AG04450 (cell line): ENCODE measurements at regions of chr16 and their contacts with region 1.

Region 1: DNA sequence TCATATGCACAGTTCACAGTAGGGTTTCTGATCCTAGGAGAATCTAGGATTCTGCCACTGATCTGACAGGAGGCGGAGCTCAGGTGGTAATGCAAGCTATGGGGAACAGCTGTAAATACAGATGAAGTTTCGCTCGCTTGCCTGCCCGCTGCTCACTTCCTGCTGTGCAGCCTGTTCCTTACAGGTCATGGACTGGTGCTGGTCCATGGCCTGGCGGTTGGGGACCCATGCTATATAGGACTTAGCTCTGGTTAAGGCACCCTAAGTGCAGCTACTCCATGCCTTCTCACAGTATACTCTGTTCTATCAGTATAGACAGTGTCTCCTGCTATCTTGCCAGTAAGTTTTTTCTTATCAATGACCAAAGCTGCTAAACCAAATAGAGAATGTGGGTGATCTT is 2.4 kb downstream of the MPHOSPH6 start:
- DNase-seq: no peak
- H3K4me3 ChIP-seq: no peak overlapping the region
- H3K27ac ChIP-seq: no peak overlapping the region
- H3K27me3 ChIP-seq: no peaks in the 10 kb centered on the region
- CTCF ChIP-seq: no peak

Region 2: DNA sequence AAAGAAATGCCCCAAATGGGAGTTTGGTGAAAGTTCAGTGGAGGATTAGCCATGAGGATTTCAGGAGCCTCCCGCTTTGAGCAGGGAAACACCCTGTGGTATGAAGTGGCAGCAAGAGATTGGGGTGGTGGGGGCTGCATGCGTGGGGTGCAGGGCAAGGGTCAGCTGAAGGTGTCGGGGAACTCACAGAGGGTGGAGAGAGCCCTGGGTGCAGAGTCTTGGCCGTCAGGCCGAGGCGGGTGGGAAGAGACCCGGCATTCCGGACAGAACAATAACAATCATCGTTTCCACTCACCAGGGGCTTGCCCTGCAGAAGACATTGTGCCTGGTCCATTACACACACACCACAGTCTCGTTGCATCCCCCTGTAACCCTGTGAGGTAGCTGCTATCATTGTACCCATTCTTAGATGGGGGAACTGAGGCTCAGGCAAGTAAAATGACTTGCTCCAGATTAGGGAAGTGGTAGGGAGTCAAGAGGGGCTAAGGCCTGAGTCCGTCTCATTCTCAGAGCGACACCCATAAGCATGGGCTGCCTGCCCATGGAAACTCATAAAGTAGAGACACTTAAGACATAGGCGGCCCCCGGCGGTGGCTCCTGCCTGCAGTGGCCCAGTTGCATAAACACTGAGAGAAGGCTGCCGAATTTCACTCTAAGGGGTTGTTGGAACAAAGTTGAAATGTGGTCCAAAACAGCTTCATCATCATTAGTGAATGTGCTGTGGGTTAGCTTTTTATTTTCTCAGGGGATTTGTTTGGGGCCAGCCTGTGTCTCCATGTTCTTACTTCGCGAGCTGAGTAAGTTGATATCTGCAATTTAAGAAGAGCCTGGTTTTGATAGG is 629.7 kb before region 1 on chr16:
- CTCF ChIA-PET with region 1: no interaction called
- POLR2A ChIA-PET with region 1: interaction called, 11 read pairs
- DNase-seq: no peak
- H3K4me3 ChIP-seq: no peak overlapping the region
- H3K27ac ChIP-seq: no peak overlapping the region
- H3K27me3 ChIP-seq: no peaks in the 10 kb centered on the region
- CTCF ChIP-seq: no peak

Region 3: DNA sequence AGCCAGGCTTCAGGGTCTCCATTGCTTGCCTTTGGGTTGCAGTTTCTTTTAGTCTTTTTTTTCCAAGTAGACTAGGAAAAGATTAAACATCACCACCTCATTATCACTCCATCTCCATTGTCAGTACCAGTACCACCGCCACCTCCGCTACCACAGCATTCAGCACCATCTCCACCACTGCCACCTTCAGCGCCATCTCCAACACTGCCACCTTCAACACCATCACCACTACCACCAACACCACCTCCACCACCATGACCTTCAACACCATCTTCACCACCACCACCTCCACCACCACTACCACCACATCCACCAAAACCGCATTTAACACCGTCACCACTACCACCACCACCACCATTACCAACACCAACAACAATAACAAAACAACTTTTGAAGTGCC is 143.9 kb after region 1 on chr16:
- CTCF ChIA-PET with region 1: no interaction called
- POLR2A ChIA-PET with region 1: no interaction called
- DNase-seq: no peak
- H3K4me3 ChIP-seq: no peak overlapping the region
- H3K27ac ChIP-seq: no peak overlapping the region
- H3K27me3 ChIP-seq: no peaks in the 10 kb centered on the region
- CTCF ChIP-seq: no peak